ENCODE measurements at regions of chr14 and their contacts with region 1.

Region 1: GRCh38 chr14:89936658-89937185 is 17.8 kb downstream of the EFCAB11 start:
- DNase-seq: no peak
- ATAC-seq: no peak
- H3K4me3 Mint-ChIP-seq: no peak overlapping the region
- H3K27ac Mint-ChIP-seq: no peak overlapping the region
- H3K4me1 Mint-ChIP-seq: peaks cover 16% of the 10 kb centered on the region
- H3K27me3 Mint-ChIP-seq: no peaks in the 10 kb centered on the region
- CTCF ChIP-seq: no peak

Region 2: DNA sequence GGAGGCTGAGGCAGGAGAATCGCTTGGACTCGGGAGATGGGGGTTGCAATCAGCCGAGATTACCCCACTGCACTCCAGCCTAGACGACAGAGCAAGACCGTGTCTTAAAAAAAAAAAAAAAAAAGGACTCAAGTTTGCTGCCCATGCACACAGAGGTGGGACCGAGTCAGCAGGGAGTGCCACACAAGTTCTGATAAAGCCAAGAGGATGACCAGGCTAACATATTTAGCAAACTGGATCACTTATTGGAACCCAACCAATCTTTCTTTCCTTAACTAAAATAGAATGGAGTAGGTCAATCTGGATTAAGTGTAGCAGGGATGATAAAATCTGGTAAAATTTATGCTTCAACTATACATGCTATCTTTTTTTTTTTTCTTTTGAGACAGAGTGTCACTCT is 329.3 kb before region 1 on chr14:
- CTCF ChIA-PET with region 1: no interaction called
- POLR2A ChIA-PET with region 1: no interaction called
- DNase-seq: no peak
- ATAC-seq: no peak
- H3K4me3 Mint-ChIP-seq: no peak overlapping the region
- H3K27ac Mint-ChIP-seq: peak overlapping the region; percentile 45; the same call in 1 of the 2 replicates
- H3K4me1 Mint-ChIP-seq: peaks cover 60% of the 10 kb centered on the region
- H3K27me3 Mint-ChIP-seq: no peaks in the 10 kb centered on the region
- CTCF ChIP-seq: no peak

Region 3: DNA sequence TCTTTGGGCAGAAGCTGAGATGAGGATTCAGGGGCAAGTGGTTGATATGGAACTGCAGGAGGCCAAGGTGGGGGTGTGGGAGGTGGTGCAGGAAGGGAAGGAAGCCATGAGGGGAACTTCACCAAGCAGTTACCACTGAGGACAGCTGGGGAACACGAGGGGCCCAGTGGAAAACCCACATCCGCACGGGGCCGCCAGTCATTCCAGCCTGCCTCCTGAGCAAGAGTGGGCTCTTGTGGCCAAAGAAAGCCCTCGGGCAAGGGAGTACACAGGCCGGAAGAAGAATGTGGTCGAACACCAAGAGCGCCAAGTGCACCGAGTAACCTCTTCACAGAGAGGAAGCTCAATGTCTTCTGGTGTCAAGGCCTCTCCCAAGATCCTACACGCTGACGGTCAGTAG is 267.5 kb before region 1 on chr14:
- CTCF ChIA-PET with region 1: no interaction called
- POLR2A ChIA-PET with region 1: no interaction called
- DNase-seq: no peak
- ATAC-seq: no peak
- H3K4me3 Mint-ChIP-seq: no peak overlapping the region
- H3K27ac Mint-ChIP-seq: no peak overlapping the region
- H3K4me1 Mint-ChIP-seq: peaks cover 4% of the 10 kb centered on the region
- H3K27me3 Mint-ChIP-seq: no peaks in the 10 kb centered on the region
- CTCF ChIP-seq: no peak

Region 4: DNA sequence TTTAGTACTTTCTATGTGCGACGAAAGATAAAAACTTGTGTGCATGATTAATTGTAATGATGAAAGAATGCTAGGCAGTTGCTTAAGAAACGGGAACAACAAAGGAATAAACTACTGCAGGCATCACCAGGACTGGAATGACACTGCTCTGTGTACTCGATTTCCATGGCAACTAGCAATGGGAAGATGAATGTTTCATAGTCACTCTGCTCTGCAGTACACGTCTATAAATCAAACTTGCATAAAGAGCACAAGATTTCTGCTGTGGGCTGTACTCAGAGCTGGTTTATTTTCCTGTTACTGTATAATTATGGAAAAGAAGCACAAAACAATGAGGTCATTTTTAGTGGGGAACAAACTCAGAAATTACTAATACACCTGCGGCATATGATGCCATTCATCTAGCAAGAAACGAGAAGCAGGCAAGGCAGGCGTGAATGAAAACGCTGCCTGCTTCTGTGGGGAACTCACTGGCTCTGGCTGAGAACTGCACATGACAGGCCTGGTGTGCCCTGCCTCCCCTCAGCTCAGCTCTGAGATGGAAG is 24.0 kb before region 1 on chr14:
- CTCF ChIA-PET with region 1: interaction called, 19 read pairs
- POLR2A ChIA-PET with region 1: no interaction called
- DNase-seq: no peak
- ATAC-seq: no peak
- H3K4me3 Mint-ChIP-seq: no peak overlapping the region
- H3K27ac Mint-ChIP-seq: no peak overlapping the region
- H3K4me1 Mint-ChIP-seq: peaks cover 51% of the 10 kb centered on the region
- H3K27me3 Mint-ChIP-seq: no peaks in the 10 kb centered on the region; the same call in 1 of the 2 replicates
- CTCF ChIP-seq: no peak

Region 5: GRCh38 chr14:89922031-89922907 is 14.5 kb before region 1 on chr14:
- CTCF ChIA-PET with region 1: interaction called, 47 read pairs
- POLR2A ChIA-PET with region 1: no interaction called
- DNase-seq: no peak
- ATAC-seq: no peak
- H3K4me3 Mint-ChIP-seq: no peak overlapping the region
- H3K27ac Mint-ChIP-seq: no peak overlapping the region
- H3K4me1 Mint-ChIP-seq: peaks cover 10% of the 10 kb centered on the region
- H3K27me3 Mint-ChIP-seq: no peaks in the 10 kb centered on the region
- CTCF ChIP-seq: no peak

Region 6: DNA sequence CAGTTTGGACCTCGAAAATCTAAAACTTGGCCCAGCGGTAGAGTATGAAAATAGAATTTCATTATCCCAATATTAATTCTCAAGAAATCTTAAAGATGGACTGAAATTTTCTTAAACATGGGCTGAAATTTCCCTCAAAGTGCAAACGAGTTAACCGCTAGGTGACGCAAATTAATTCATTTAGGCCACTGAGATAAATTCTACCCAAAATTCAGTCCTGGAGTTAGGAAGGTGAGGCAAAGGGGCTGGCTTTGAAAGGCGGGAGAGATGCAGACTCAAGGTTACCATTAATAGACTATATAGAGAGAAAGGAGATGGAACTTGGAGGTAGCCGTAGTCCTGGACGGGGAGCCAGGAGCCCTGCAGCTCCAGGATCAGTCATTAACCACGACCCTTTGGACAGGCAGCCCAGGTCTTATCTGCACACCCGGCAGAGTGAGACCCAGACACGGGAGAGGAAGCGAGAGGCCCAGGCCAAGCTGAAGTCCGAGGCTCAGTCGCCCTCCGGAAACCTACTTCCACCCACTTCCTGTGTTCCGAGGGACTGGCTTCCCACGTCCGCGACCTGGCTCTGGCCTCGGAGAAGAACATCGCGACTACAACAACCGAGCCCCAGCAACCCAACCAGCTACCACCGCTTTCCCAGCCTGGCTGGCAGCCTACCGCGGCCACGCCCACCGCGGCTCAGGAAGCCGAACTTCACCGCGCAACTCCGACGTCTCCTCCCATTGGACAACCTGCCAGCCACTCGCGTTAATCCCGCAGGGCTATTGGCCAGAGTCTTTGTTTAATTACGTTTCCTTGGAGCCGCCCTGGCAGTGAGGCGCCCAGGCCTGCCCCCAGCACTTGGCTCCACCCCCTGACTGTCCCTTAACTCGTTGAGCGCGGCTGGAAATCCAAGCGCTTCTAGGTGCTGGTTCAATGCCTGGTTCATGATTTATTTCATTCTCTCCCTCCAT is 17.6 kb after region 1 on chr14 and contains the start of gene EFCAB11:
- CTCF ChIA-PET with region 1: interaction called, 66 read pairs
- POLR2A ChIA-PET with region 1: interaction called, 3 read pairs
- DNase-seq: peak; percentile 97
- ATAC-seq: peak; percentile 92
- H3K4me3 Mint-ChIP-seq: peak within 1 kb of the TSS; percentile 97
- H3K27ac Mint-ChIP-seq: peak within 1 kb of the TSS; percentile 98
- H3K4me1 Mint-ChIP-seq: peaks cover 33% of the 10 kb centered on the region
- H3K27me3 Mint-ChIP-seq: no peaks in the 10 kb centered on the region
- CTCF ChIP-seq: no peak
- total RNA-seq, gene EFCAB11: 15.5 to 18.8 TPM (median 18.0 TPM) in 3 replicates

Region 7: GRCh38 chr14:89959853-89960445 is 23.2 kb after region 1 on chr14:
- CTCF ChIA-PET with region 1: interaction called, 66 read pairs
- POLR2A ChIA-PET with region 1: no interaction called
- DNase-seq: no peak
- ATAC-seq: no peak
- H3K4me3 Mint-ChIP-seq: no peak overlapping the region
- H3K27ac Mint-ChIP-seq: no peak overlapping the region
- H3K4me1 Mint-ChIP-seq: peaks cover 47% of the 10 kb centered on the region
- H3K27me3 Mint-ChIP-seq: no peaks in the 10 kb centered on the region
- CTCF ChIP-seq: no peak

Region 8: DNA sequence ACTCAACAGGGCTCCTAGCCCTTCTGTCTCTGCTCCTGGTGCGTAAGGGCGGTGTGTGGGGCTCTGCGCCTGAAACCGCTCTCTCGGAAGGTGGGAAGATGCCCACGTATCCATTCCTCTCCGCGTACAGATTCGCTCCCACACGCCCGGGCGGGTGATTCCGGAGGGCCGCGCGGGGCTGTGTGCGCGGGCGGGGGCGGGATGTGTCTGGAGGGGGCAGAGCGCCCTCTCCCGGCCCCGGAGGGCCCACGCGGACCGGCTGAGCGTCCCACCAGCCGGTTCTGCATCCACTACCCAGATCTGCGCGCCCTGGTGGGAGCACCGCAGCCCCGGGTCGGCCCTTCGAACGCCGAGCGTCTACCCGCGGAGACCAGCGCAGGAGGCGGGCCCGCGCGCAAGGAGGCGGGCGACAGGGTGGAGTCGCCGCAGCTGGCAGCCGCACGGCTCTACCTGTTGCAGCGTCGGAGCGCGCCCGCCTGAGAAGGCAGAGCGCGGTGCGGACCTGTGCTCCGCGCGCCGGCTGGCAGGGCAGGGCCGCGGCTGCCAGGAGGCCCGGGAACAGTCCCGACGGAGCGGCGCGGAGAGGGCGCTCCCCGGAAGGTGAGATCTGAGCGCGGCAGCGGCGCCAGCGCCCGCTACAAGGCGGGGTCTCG is 123.7 kb after region 1 on chr14:
- CTCF ChIA-PET with region 1: interaction called, 20 read pairs
- POLR2A ChIA-PET with region 1: no interaction called
- DNase-seq: peak; percentile 81
- ATAC-seq: peak; percentile 82
- H3K4me3 Mint-ChIP-seq: peak overlapping the region; percentile 73
- H3K27ac Mint-ChIP-seq: no peak overlapping the region
- H3K4me1 Mint-ChIP-seq: peaks cover 28% of the 10 kb centered on the region
- H3K27me3 Mint-ChIP-seq: peaks cover 82% of the 10 kb centered on the region
- CTCF ChIP-seq: peak; percentile 47; the same call in 1 of the 2 replicates

Measured in WTC11 (cell line).